ENCODE measurements at regions of chr17 and their contacts with region 1.

Region 1: DNA sequence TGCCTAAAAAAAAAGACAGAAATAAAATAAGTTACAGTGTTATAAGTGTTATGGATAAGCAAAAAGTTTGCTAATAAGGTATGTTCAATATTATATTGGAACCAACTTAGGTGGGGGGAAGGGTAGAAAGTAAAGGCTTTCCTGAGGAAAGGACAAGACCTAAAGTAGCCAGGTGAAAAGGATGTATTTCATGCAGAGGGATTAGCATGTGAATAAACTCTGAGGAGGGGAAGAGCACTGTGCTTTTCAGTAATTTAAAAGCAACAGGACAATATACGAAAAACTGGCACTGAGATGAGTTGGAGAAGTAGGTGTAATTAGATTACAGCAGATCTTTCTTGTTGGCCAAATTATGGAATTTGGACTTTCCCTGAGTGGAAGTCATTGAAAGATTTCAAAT is 7.6 kb downstream of the TOP2A start:
- DNase-seq: no peak
- H3K4me3 ChIP-seq: no peak overlapping the region
- H3K27ac ChIP-seq: 0 out of 4 replicates have a peak overlapping the region, but pooled peaks of 1 of the 2 experiments have one; percentile 0
- H3K4me1 ChIP-seq: no peaks in the 10 kb centered on the region
- H3K27me3 ChIP-seq: no peaks in the 10 kb centered on the region
- CTCF ChIP-seq: no peak
- EP300 ChIP-seq: no peak
- RAD21 ChIP-seq: no peak

Region 2: GRCh38 chr17:40303009-40303657 is 106.9 kb before region 1 on chr17:
- CTCF ChIA-PET with region 1: interaction called, 12 read pairs
- POLR2A ChIA-PET with region 1: no interaction called
- DNase-seq: peak; percentile 63
- H3K4me3 ChIP-seq: no peak overlapping the region; a peak in 1 of 4 replicates
- H3K27ac ChIP-seq: peak overlapping the region; percentile 82 to 99
- H3K4me1 ChIP-seq: peaks cover 48 to 53% of the 10 kb centered on the region in 2 experiments
- H3K27me3 ChIP-seq: no peaks in the 10 kb centered on the region
- CTCF ChIP-seq: peak; percentile 86
- EP300 ChIP-seq: 0 out of 4 replicates have a peak, but pooled peaks of 1 of the 2 experiments have one; percentile 45
- RAD21 ChIP-seq: peak; percentile 96